B cell (primary cell): ENCODE measurements at regions of chr12 and their contacts with region 1.

Region 1: GRCh38 chr12:110619534-110619953 is 5.6 kb downstream of the TCTN1 start:
- DNase-seq: peak; percentile 76
- ATAC-seq: peak; percentile 75
- H3K4me3 ChIP-seq: peak overlapping the region in 4 of 5 experiments; percentile 30 to 55 (median 44)
- H3K4me3 Mint-ChIP-seq: peak overlapping the region; percentile 89
- H3K27ac ChIP-seq: peak overlapping the region; percentile 63 to 76
- H3K27ac Mint-ChIP-seq: peak overlapping the region; percentile 96
- H3K4me1 ChIP-seq: peaks cover 60 to 81% of the 10 kb centered on the region in 2 donors
- H3K4me1 Mint-ChIP-seq: peaks cover 65% of the 10 kb centered on the region
- H3K27me3 ChIP-seq: no peaks in the 10 kb centered on the region
- H3K27me3 Mint-ChIP-seq: no peaks in the 10 kb centered on the region
- CTCF ChIP-seq: peak; percentile 62

Region 2: GRCh38 chr12:110639336-110640141 is 20.0 kb after region 1 on chr12:
- CTCF ChIA-PET with region 1: interaction called, 15 read pairs
- POLR2A ChIA-PET with region 1: interaction called, 5 read pairs
- intact Hi-C with region 1: loop called (anchors 2 kb)
- DNase-seq: no peak
- ATAC-seq: peak; percentile 39
- H3K4me3 ChIP-seq: no peak overlapping the region
- H3K4me3 Mint-ChIP-seq: peak overlapping the region; percentile 53
- H3K27ac ChIP-seq: peak overlapping the region in 1 of 2 donors; percentile 90
- H3K27ac Mint-ChIP-seq: peak overlapping the region; percentile 98
- H3K4me1 ChIP-seq: peaks cover 87 to 98% of the 10 kb centered on the region in 2 donors
- H3K4me1 Mint-ChIP-seq: peaks cover 89% of the 10 kb centered on the region
- H3K27me3 ChIP-seq: no peaks in the 10 kb centered on the region
- H3K27me3 Mint-ChIP-seq: no peaks in the 10 kb centered on the region
- CTCF ChIP-seq: no peak

Region 3: GRCh38 chr12:110661337-110661972 is 41.9 kb after region 1 on chr12:
- CTCF ChIA-PET with region 1: interaction called, 22 read pairs
- POLR2A ChIA-PET with region 1: interaction called, 3 read pairs
- intact Hi-C with region 1: loop called (anchors 1 kb)
- DNase-seq: peak; percentile 93
- ATAC-seq: peak; percentile 85
- H3K4me3 ChIP-seq: peak overlapping the region in 4 of 5 experiments; percentile 5 to 44 (median 16)
- H3K4me3 Mint-ChIP-seq: peak overlapping the region; percentile 92
- H3K27ac ChIP-seq: peak overlapping the region; percentile 96 to 99
- H3K27ac Mint-ChIP-seq: peak overlapping the region; percentile 98
- H3K4me1 ChIP-seq: peaks cover 59 to 82% of the 10 kb centered on the region in 2 donors
- H3K4me1 Mint-ChIP-seq: peaks cover 81% of the 10 kb centered on the region
- H3K27me3 ChIP-seq: no peaks in the 10 kb centered on the region
- H3K27me3 Mint-ChIP-seq: no peaks in the 10 kb centered on the region
- CTCF ChIP-seq: no peak

Region 4: DNA sequence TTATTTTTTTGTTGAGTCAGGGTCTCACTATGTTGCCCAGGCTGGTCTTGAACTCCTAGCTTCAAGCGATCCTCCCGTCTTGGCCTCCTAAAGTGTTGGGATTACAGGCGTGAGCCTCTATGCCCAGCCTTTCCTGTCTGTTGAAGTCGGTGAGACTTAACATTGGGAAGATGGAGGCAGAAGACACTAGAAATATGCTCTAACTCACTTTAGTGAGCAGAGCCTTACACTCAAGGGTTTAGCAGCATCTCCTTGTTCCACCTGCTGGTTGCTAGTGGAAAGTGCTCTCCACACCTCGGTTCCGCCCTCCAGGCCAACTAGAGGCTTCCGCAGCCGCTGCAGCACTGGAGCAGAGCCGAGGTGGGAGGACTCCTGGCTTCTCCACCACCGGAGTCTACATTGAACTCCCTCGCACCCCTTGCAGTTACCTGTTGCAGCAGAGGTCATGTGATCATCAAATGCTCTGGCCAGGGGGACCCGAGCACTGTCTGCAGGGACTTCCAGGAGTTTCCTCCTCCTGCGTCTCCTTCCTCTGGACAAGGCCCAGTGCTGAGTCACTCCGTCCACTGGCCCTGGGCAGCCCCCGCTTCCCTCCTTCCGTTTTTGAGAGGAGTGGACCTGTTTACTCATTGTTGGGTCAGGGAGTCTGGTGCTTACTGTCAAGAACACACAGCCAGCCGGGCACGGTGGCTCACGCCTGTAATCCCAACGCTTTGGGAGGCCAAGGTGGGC is 78.8 kb after region 1 on chr12:
- CTCF ChIA-PET with region 1: interaction called, 64 read pairs
- POLR2A ChIA-PET with region 1: interaction called, 4 read pairs
- intact Hi-C with region 1: loop called (anchors 1 kb)
- DNase-seq: peak; percentile 90
- ATAC-seq: peak; percentile 100
- H3K4me3 ChIP-seq: peak overlapping the region in 2 of 5 experiments; percentile 21 to 29
- H3K4me3 Mint-ChIP-seq: peak overlapping the region; percentile 64
- H3K27ac ChIP-seq: peak overlapping the region in 1 of 2 donors; percentile 58
- H3K27ac Mint-ChIP-seq: peak overlapping the region; percentile 94
- H3K4me1 ChIP-seq: peaks cover 36 to 37% of the 10 kb centered on the region in 2 donors
- H3K4me1 Mint-ChIP-seq: peaks cover 47% of the 10 kb centered on the region
- H3K27me3 ChIP-seq: no peaks in the 10 kb centered on the region
- H3K27me3 Mint-ChIP-seq: no peaks in the 10 kb centered on the region
- CTCF ChIP-seq: peak; percentile 82